ENCODE measurements at regions of chrX and their contacts with region 1.

Region 1: GRCh38 chrX:54044126-54044876 is at the start of gene PHF8:
- DNase-seq: peak; percentile 87
- ATAC-seq: peak; percentile 82
- H3K4me3 Mint-ChIP-seq: peak within 1 kb of the TSS; percentile 92
- H3K27ac Mint-ChIP-seq: peak within 1 kb of the TSS; percentile 96
- H3K4me1 Mint-ChIP-seq: peaks cover 15% of the 10 kb centered on the region
- H3K27me3 Mint-ChIP-seq: no peaks in the 10 kb centered on the region
- CTCF ChIP-seq: no peak
- total RNA-seq, gene PHF8: 56.6 and 58.7 TPM in 2 replicates

Region 2: DNA sequence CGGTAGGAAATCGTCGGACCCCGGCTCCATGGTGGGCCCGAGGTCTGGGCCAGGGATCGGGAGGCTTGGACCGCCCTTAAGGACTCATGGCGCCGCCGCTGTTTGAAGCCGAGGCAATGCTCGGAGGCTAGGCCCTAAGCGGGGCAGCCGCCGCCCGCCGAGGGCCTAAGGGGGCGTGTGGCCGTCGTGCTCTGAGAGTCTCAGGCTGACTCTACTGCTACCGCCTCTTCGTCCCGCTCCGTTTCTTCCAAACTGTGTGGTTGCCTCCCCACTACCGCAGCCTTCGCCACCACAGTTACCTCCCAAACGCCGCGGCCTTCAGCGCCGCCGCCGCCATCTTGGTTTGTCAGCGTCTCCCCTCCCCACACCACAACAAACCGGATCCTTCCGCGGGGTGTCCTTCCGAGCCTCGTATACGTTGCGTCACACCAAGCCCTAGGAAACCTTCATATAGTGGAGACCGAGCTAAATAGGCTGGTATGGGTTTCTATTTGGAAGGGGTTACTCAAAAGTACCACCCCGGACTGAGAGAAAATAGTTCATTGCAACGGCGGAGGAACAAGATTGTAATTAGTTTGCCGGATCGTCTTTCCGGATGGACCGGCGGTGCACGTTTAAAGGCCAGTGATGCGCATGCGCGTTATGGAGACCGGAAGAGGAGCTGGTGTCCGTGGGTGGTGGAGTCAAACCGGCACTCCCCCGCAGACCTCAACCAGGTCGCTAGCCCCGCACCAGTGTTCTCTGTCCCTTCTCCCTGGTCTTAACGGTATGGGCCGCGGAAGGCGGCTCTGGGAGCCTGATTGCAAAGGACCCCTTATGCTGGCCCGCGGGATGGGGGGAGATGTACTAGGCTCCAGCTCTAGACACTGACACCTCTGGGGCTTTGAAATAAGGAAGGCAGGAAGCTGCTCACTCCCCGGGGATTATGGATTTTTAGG is 819.2 kb before region 1 on chrX and contains the start of gene KDM5C:
- CTCF ChIA-PET with region 1: no interaction called
- POLR2A ChIA-PET with region 1: no interaction called
- intact Hi-C with region 1: loop called (anchors 2 kb)
- DNase-seq: peak; percentile 69
- ATAC-seq: peak; percentile 91
- H3K4me3 Mint-ChIP-seq: peak within 1 kb of the TSS; percentile 98
- H3K27ac Mint-ChIP-seq: peak within 1 kb of the TSS; percentile 98
- H3K4me1 Mint-ChIP-seq: peaks cover 33% of the 10 kb centered on the region
- H3K27me3 Mint-ChIP-seq: no peaks in the 10 kb centered on the region
- CTCF ChIP-seq: no peak
- total RNA-seq, gene KDM5C: 109 and 117 TPM in 2 replicates

Region 3: GRCh38 chrX:53795536-53795935 is 248.8 kb before region 1 on chrX:
- CTCF ChIA-PET with region 1: no interaction called
- POLR2A ChIA-PET with region 1: no interaction called
- intact Hi-C with region 1: no loop called
- DNase-seq: no peak
- ATAC-seq: no peak
- H3K4me3 Mint-ChIP-seq: no peak overlapping the region
- H3K27ac Mint-ChIP-seq: no peak overlapping the region
- H3K4me1 Mint-ChIP-seq: no peaks in the 10 kb centered on the region
- H3K27me3 Mint-ChIP-seq: peaks cover 2% of the 10 kb centered on the region
- CTCF ChIP-seq: no peak

Region 4: DNA sequence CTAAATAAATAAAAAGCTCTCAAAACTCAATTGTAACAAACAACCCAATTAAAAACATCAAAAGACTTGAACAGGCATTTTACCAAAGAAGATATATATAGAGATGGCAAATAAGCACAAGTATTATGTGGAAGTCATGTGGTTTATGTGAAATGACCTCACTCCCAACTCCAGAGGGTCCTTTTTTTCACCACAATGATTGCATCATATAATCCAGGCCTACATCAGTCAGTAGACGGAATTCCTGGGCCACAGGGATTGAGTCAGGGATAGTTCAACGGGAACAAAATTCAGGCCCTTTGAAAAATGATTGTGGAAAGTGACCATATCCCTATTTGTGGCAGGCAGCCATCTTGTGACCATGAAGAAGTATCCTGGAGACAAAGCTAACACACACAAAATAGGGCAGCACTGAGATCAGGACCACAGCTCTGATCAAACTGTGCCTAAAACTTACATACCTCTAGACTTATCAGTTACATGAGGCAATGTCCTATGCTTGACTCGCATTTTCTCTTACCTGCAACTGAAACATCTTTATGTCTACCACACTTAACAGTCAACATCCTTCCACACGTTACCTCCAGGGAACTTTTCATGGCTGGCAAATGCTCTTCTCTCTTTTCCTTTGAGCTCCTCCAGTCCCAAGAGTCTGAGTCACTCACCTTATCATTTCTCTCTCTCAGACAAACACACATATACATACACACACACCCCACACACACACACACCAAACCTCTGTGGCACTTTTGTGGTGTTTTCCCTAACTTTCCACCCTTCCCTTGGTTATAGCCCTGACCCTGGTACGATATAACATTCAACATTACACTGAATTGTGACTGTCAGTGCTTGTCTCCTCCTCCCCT is 113.6 kb before region 1 on chrX:
- CTCF ChIA-PET with region 1: no interaction called
- POLR2A ChIA-PET with region 1: no interaction called
- intact Hi-C with region 1: no loop called
- DNase-seq: no peak
- ATAC-seq: no peak
- H3K4me3 Mint-ChIP-seq: no peak overlapping the region
- H3K27ac Mint-ChIP-seq: no peak overlapping the region
- H3K4me1 Mint-ChIP-seq: no peaks in the 10 kb centered on the region
- H3K27me3 Mint-ChIP-seq: no peaks in the 10 kb centered on the region
- CTCF ChIP-seq: no peak

Region 5: GRCh38 chrX:53984895-53985294 is 59.4 kb before region 1 on chrX:
- CTCF ChIA-PET with region 1: no interaction called
- POLR2A ChIA-PET with region 1: no interaction called
- intact Hi-C with region 1: no loop called
- DNase-seq: no peak
- ATAC-seq: no peak
- H3K4me3 Mint-ChIP-seq: no peak overlapping the region
- H3K27ac Mint-ChIP-seq: no peak overlapping the region
- H3K4me1 Mint-ChIP-seq: no peaks in the 10 kb centered on the region
- H3K27me3 Mint-ChIP-seq: no peaks in the 10 kb centered on the region
- CTCF ChIP-seq: no peak

Region 6: DNA sequence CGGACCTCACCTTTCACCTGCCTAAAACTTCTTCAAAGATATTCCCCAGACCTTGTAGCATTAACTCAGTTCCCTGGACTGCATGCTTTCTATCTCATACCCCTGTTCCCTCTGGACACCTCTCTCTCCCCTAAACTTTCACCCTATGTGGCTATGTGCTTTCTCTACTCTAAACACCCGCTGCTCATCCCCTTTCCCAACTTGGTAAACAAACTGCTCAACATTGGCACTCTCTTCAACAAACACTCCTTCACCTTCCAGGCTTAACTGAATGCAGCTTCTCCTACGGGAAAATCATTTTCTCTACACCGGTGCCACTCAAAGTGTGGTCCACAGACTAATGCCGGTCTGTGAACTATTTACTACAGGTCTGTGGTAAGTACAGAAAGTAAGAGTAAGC is 20.0 kb before region 1 on chrX:
- CTCF ChIA-PET with region 1: no interaction called
- POLR2A ChIA-PET with region 1: no interaction called
- intact Hi-C with region 1: no loop called
- DNase-seq: no peak
- ATAC-seq: no peak
- H3K4me3 Mint-ChIP-seq: no peak overlapping the region
- H3K27ac Mint-ChIP-seq: no peak overlapping the region
- H3K4me1 Mint-ChIP-seq: no peaks in the 10 kb centered on the region
- H3K27me3 Mint-ChIP-seq: no peaks in the 10 kb centered on the region
- CTCF ChIP-seq: no peak

Region 7: DNA sequence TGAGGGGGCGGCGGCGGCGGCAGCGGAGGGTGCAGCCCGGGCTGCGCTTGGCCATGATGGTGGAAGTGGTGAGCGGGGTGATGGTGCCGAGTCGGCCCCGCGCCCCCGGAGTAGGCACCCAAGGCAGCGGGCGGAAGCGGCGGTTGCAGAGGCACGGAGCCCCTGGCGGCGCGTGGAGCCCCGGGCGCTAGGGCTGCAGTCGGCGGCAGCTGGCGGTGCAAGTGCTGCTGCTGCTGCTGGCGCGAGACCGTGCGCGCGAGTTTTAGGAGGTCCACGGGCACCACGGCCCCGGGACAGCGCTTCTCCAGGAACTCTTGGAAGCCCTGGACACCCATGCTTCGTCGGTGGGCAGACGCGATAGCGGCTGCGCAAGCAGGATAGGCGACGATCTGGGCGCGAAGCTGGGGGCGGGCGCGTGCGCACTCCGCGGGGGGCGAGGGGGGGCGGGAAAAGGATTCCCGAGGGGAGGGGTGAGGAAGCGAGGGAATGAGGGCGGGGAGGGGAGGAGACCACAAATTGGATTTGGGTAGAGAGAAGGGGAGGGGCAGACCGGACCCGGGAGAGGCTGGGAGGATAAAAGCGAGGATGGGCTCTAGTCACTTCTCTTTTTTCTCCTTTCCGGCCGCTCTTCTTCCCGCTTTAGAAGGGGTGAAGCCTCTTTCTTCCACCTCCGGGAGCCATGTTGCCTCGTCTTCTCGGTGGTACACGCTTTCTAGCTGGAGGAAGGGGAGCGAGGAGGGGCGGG is 138.7 kb after region 1 on chrX and contains the start of gene FAM120C:
- CTCF ChIA-PET with region 1: no interaction called
- POLR2A ChIA-PET with region 1: interaction called, 37 read pairs
- intact Hi-C with region 1: loop called (anchors 1 kb)
- DNase-seq: peak; percentile 41
- ATAC-seq: peak; percentile 79
- H3K4me3 Mint-ChIP-seq: peak within 1 kb of the TSS; percentile 83
- H3K27ac Mint-ChIP-seq: peak within 1 kb of the TSS; percentile 85
- H3K4me1 Mint-ChIP-seq: peaks cover 41% of the 10 kb centered on the region
- H3K27me3 Mint-ChIP-seq: no peaks in the 10 kb centered on the region
- CTCF ChIP-seq: no peak
- total RNA-seq, gene FAM120C: 14.0 and 20.2 TPM in 2 replicates

Region 8: GRCh38 chrX:54529552-54530357 is 485.5 kb after region 1 on chrX and contains the start of gene GNL3L:
- CTCF ChIA-PET with region 1: no interaction called
- POLR2A ChIA-PET with region 1: interaction called, 29 read pairs
- intact Hi-C with region 1: loop called (anchors 1 kb)
- DNase-seq: peak; percentile 66
- ATAC-seq: peak; percentile 83
- H3K4me3 Mint-ChIP-seq: peak within 1 kb of the TSS; percentile 94
- H3K27ac Mint-ChIP-seq: peak within 1 kb of the TSS; percentile 97
- H3K4me1 Mint-ChIP-seq: peaks cover 43% of the 10 kb centered on the region
- H3K27me3 Mint-ChIP-seq: no peaks in the 10 kb centered on the region
- CTCF ChIP-seq: no peak
- total RNA-seq, gene GNL3L: 67.1 and 70.5 TPM in 2 replicates

Region 9: DNA sequence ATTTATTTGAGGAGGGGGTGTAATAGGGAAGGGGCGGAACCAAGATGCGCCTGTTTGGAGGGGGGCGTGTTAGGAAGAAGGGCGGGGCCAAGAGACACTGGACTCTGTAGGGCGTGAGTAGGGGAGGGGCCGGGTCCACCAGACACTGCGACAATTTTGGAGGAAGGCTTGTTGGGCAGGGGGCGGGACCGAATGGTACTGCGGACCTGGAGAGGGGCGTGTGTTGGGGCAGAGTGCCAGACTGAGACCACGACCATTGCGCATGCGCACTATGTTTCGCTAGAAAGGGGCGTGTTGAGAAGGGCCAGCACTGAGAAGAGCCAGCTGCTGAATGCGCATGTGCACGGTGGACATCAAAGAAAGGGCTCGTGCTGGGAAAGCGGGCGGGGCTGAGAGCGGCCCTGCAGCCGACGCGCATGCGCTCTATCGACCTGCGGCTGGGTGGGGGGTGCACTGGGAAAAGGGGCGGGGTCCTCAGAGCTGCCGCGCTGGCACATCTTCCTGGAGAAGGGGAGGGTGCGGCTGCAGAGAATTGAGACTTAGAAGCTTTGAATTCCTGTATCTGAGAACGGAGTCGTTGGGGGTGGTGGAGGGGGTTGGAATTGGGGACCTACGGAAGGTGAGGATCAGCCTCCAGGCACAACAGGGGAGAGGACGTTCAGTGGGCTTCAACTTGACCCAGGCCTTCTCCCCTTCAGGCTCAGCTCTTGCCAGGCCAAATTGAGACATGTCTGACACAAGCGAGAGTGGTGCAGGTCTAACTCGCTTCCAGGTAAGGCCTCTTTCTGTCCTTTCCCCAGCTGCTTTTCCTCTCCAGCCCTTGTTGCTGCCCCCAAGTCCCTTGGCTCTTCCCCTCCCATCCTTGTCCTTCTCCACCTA is 764.5 kb after region 1 on chrX:
- CTCF ChIA-PET with region 1: no interaction called
- POLR2A ChIA-PET with region 1: interaction called, 3 read pairs
- intact Hi-C with region 1: loop called (anchors 1 kb)
- DNase-seq: peak; percentile 73
- ATAC-seq: peak; percentile 96
- H3K4me3 Mint-ChIP-seq: peak overlapping the region; percentile 92
- H3K27ac Mint-ChIP-seq: peak overlapping the region; percentile 91
- H3K4me1 Mint-ChIP-seq: peaks cover 14% of the 10 kb centered on the region
- H3K27me3 Mint-ChIP-seq: no peaks in the 10 kb centered on the region
- CTCF ChIP-seq: no peak